ENCODE measurements at regions of chr1 and their contacts with region 1.

Region 1: DNA sequence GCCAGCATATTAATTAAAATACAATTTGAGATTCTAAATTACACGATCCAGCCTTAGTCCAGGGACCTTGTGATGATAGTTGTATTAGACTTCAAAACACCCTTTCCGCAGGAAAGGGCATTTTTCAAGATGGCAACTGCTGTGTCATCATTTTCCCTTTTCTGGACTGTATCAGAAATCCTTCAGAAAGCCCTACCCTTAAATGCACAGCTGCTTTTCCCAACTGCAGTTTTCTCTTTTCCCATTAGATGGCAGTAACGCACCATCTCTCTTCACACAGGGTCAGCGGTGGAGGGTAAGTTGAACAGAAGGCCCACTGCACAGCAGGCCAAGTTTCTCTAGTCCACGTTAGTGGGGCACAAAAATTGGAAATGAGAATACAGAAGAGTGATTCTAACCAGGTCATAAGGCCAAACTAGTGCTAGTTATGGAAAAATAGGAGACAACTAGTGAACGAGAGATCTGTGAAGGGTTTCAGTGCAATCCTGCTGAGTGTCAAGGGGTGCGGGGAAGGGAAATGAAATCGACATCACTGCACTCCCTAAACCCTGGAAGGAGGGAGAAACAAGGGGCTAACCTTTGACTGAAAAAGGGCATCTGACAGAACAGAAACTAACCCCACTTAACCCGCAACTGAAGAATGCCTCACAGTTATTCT is 22.1 kb upstream of the TDRD10 start:
- DNase-seq: peak; percentile 75
- H3K4me3 Mint-ChIP-seq: no peak overlapping the region
- H3K27ac Mint-ChIP-seq: no peak overlapping the region
- H3K4me1 Mint-ChIP-seq: peaks cover 18% of the 10 kb centered on the region
- H3K27me3 Mint-ChIP-seq: peaks cover 10% of the 10 kb centered on the region

Region 2: DNA sequence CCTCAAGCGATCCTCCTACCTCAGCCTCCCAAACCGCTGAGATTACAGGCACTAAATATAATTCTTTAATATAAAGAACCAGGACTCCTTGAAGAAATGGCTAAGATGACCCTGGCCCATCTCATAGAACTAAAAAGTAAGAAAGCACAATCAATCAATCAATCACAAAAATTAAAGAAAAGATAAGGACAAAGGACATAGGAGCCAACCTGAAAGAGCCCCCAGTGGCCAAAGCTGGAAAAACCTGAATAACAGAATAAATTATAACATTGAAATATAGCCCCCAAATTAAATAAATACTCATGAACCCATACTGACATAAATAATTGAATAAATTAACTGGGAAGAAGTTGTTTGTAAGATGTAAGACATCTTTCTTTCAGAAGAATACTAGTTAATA is 333.9 kb before region 1 on chr1:
- CTCF ChIA-PET with region 1: no interaction called
- POLR2A ChIA-PET with region 1: no interaction called
- DNase-seq: no peak
- H3K4me3 Mint-ChIP-seq: no peak overlapping the region
- H3K27ac Mint-ChIP-seq: no peak overlapping the region
- H3K4me1 Mint-ChIP-seq: peaks cover 5% of the 10 kb centered on the region
- H3K27me3 Mint-ChIP-seq: no peaks in the 10 kb centered on the region

Region 3: GRCh38 chr1:154546264-154547063 is 66.6 kb after region 1 on chr1:
- CTCF ChIA-PET with region 1: interaction called, 12 read pairs
- POLR2A ChIA-PET with region 1: no interaction called
- DNase-seq: peak; percentile 59
- H3K4me3 Mint-ChIP-seq: no peak overlapping the region
- H3K27ac Mint-ChIP-seq: no peak overlapping the region
- H3K4me1 Mint-ChIP-seq: peaks cover 15% of the 10 kb centered on the region
- H3K27me3 Mint-ChIP-seq: peaks cover 7% of the 10 kb centered on the region